ENCODE measurements at regions of chr13 and their contacts with region 1.

Region 1: DNA sequence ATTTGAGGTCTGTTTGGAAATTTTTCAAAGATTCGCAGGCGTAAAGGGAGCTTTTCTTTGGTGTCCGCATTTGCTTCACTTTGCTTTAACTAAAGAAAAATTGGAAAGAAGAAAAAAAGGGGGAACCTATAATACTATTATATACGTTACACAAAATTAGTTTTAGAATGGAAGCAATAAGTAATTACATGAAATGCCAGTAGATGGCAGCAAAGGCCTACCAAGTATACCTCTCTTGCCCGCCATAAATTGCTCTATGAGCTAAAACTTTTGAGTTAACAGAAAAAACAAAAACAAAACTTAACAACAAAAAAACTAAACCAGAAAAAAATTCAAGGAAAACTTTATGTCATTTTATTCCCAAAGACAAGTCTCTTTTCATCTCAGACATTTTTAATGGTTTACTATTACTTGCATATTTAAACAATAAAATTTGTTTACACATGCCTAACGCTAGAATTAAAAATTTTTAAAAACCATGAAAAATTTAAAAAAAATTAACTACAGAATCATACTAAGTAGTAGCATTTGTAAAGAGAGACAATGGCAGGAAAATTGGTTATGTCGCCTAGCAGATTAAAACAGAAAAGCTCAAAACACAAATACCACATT is 271.4 kb downstream of the NALCN start:
- DNase-seq: peak in 9 of 35 experiments; percentile 2 to 71 (median 13)
- ATAC-seq: peak in 2 of 4 experiments; percentile 44 to 57
- H3K4me3 ChIP-seq: no peak overlapping the region
- H3K4me3 Mint-ChIP-seq: no peak overlapping the region
- H3K27ac ChIP-seq: no peak overlapping the region
- H3K27ac Mint-ChIP-seq: no peak overlapping the region
- H3K4me1 ChIP-seq: no peaks in the 10 kb centered on the region
- H3K4me1 Mint-ChIP-seq: no peaks in the 10 kb centered on the region
- H3K27me3 ChIP-seq: peaks cover 0 to 13% of the 10 kb centered on the region in 2 experiments
- H3K27me3 Mint-ChIP-seq: peaks cover 29 to 35% of the 10 kb centered on the region in 2 donors

Region 2: GRCh38 chr13:100262404-100262803 is 882.5 kb before region 1 on chr13:
- CTCF ChIA-PET with region 1: interaction called in 1 of 2 experiments, 14 read pairs
- POLR2A ChIA-PET with region 1: no interaction called
- DNase-seq: no peak
- ATAC-seq: no peak
- H3K4me3 ChIP-seq: no peak overlapping the region
- H3K4me3 Mint-ChIP-seq: no peak overlapping the region
- H3K27ac ChIP-seq: no peak overlapping the region
- H3K27ac Mint-ChIP-seq: no peak overlapping the region
- H3K4me1 ChIP-seq: no peaks in the 10 kb centered on the region
- H3K4me1 Mint-ChIP-seq: no peaks in the 10 kb centered on the region
- H3K27me3 ChIP-seq: no peaks in the 10 kb centered on the region
- H3K27me3 Mint-ChIP-seq: no peaks in the 10 kb centered on the region

Region 3: GRCh38 chr13:101003566-101003965 is 141.3 kb before region 1 on chr13:
- CTCF ChIA-PET with region 1: no interaction called
- POLR2A ChIA-PET with region 1: no interaction called
- DNase-seq: no peak
- ATAC-seq: no peak
- H3K4me3 ChIP-seq: no peak overlapping the region
- H3K4me3 Mint-ChIP-seq: no peak overlapping the region
- H3K27ac ChIP-seq: no peak overlapping the region
- H3K27ac Mint-ChIP-seq: no peak overlapping the region
- H3K4me1 ChIP-seq: no peaks in the 10 kb centered on the region
- H3K4me1 Mint-ChIP-seq: no peaks in the 10 kb centered on the region
- H3K27me3 ChIP-seq: no peaks in the 10 kb centered on the region
- H3K27me3 Mint-ChIP-seq: no peaks in the 10 kb centered on the region

Region 4: GRCh38 chr13:101127741-101128353 is 17.1 kb before region 1 on chr13:
- CTCF ChIA-PET with region 1: interaction called in 1 of 2 experiments, 19 read pairs
- POLR2A ChIA-PET with region 1: interaction called in 1 of 2 experiments, 10 read pairs
- DNase-seq: peak in 11 of 35 experiments; percentile 2 to 61 (median 3)
- ATAC-seq: peak; percentile 46 to 70 (median 57)
- H3K4me3 ChIP-seq: no peak overlapping the region
- H3K4me3 Mint-ChIP-seq: no peak overlapping the region
- H3K27ac ChIP-seq: no peak overlapping the region
- H3K27ac Mint-ChIP-seq: no peak overlapping the region
- H3K4me1 ChIP-seq: no peaks in the 10 kb centered on the region
- H3K4me1 Mint-ChIP-seq: no peaks in the 10 kb centered on the region
- H3K27me3 ChIP-seq: no peaks in the 10 kb centered on the region
- H3K27me3 Mint-ChIP-seq: peaks cover 5 to 11% of the 10 kb centered on the region in 2 donors

Region 5: GRCh38 chr13:101155920-101156319 is 11.0 kb after region 1 on chr13:
- CTCF ChIA-PET with region 1: interaction called, 4 to 14 read pairs
- POLR2A ChIA-PET with region 1: no interaction called
- DNase-seq: no peak
- ATAC-seq: no peak
- H3K4me3 ChIP-seq: no peak overlapping the region
- H3K4me3 Mint-ChIP-seq: no peak overlapping the region
- H3K27ac ChIP-seq: no peak overlapping the region
- H3K27ac Mint-ChIP-seq: no peak overlapping the region
- H3K4me1 ChIP-seq: no peaks in the 10 kb centered on the region
- H3K4me1 Mint-ChIP-seq: no peaks in the 10 kb centered on the region
- H3K27me3 ChIP-seq: no peaks in the 10 kb centered on the region
- H3K27me3 Mint-ChIP-seq: peaks cover 22 to 40% of the 10 kb centered on the region in 2 donors

Region 6: DNA sequence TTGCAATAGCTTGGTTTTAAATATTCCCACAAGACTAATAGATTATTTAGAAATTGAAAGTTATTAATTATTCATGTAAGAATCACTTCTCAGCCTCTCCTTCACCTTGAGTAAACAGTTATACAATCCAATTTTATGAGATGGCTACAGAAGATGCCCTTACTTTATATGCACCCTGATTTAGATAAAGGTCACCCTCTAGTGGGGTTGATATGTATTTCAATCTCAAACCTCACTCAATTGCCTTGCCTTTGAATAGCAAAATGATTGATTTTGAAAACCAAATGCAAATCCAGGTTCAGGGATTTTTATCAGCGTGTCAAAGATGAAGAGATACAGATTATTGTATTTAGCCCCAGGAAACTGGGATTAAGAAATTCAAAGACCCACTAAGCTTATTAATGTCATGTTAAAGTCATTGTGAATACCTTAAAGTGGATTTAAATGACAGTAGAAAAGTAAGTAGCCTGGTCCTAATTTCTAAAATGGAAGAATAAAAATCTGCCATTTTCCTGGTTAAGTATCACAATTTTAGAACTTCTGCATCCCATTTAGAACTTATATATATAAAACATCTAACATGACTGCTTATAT is 612.6 kb after region 1 on chr13:
- CTCF ChIA-PET with region 1: interaction called, 8 to 12 read pairs
- POLR2A ChIA-PET with region 1: no interaction called
- DNase-seq: peak in 2 of 35 experiments; percentile 2 to 52
- ATAC-seq: peak in 2 of 4 experiments; percentile 47 to 60
- H3K4me3 ChIP-seq: no peak overlapping the region
- H3K4me3 Mint-ChIP-seq: no peak overlapping the region
- H3K27ac ChIP-seq: no peak overlapping the region
- H3K27ac Mint-ChIP-seq: no peak overlapping the region
- H3K4me1 ChIP-seq: no peaks in the 10 kb centered on the region
- H3K4me1 Mint-ChIP-seq: no peaks in the 10 kb centered on the region
- H3K27me3 ChIP-seq: peaks cover 0 to 3% of the 10 kb centered on the region in 2 experiments
- H3K27me3 Mint-ChIP-seq: peaks cover 7 to 29% of the 10 kb centered on the region in 2 donors

Region 7: DNA sequence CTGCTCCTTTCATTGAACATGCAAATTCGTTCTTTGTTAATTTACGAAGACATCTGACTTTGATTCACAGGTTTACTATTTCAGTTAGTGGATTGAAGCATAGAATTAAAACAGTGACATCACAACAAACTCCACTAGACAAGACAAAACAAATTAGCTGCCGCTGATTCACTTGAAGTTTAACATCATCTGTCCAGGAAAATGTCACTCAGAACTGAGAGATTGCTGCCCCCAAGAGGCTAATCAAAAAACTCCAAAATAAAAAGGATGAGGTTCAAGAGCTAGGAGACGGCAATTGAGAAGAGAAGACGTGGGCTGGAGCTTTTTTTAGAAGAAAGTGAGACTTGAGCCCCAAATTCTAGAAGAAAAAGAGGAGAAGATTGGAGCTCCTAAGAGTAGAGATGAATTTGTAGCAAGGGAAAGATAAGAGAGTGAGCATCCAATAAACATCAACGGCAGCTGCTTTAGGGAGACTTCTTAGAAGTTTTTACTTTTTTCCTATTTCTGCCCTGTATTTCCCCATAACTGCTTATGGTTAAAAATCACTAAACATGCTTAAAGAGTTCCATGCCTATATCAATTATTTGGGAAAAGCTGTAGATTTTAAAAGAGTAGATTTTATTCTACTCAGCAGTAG is 1411.1 kb after region 1 on chr13:
- CTCF ChIA-PET with region 1: interaction called, 11 to 26 read pairs
- POLR2A ChIA-PET with region 1: no interaction called
- DNase-seq: peak in 1 of 35 experiments; percentile 50
- ATAC-seq: no peak
- H3K4me3 ChIP-seq: no peak overlapping the region
- H3K4me3 Mint-ChIP-seq: no peak overlapping the region
- H3K27ac ChIP-seq: no peak overlapping the region
- H3K27ac Mint-ChIP-seq: no peak overlapping the region
- H3K4me1 ChIP-seq: no peaks in the 10 kb centered on the region
- H3K4me1 Mint-ChIP-seq: peaks cover 0 to 4% (median 4%) of the 10 kb centered on the region in 3 donors
- H3K27me3 ChIP-seq: no peaks in the 10 kb centered on the region
- H3K27me3 Mint-ChIP-seq: peaks cover 2 to 8% of the 10 kb centered on the region in 2 donors